Naive thymus-derived CD4-positive, alpha-beta T cell (primary cell): ENCODE measurements at regions of chr14 and their contacts with region 1.

Region 1: GRCh38 chr14:46887144-46887543 is 235.6 kb upstream of the RPL10L start:
- DNase-seq: no peak
- ATAC-seq: no peak
- H3K4me3 ChIP-seq: no peak overlapping the region
- H3K4me3 Mint-ChIP-seq: no peak overlapping the region
- H3K27ac ChIP-seq: no peak overlapping the region
- H3K27ac Mint-ChIP-seq: no peak overlapping the region
- H3K4me1 ChIP-seq: no peaks in the 10 kb centered on the region
- H3K4me1 Mint-ChIP-seq: no peaks in the 10 kb centered on the region
- H3K27me3 ChIP-seq: no peaks in the 10 kb centered on the region
- H3K27me3 Mint-ChIP-seq: no peaks in the 10 kb centered on the region

Region 2: DNA sequence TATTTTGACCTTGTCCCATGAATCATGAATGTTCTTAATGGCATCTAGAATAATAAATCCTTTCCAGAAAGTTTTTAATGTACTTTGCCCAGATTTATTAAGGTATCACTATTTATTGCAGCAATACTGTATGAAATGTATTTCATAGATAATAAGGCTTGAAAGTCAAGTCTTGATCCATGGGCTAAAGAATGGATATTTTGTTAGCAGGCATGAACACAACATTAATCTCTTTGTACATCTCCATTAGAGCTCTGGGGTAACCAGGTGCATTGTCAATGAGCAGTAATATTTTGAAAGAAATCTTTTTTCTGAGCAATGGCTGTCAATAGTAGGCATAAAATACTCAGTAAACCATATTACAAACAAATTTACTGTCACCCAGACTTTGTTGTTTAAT is 94.0 kb before region 1 on chr14:
- CTCF ChIA-PET with region 1: no interaction called
- POLR2A ChIA-PET with region 1: no interaction called
- intact Hi-C with region 1: loop called in 1 of 2 experiments (anchors 5 kb)
- DNase-seq: no peak
- ATAC-seq: no peak
- H3K4me3 ChIP-seq: no peak overlapping the region
- H3K4me3 Mint-ChIP-seq: no peak overlapping the region
- H3K27ac ChIP-seq: no peak overlapping the region
- H3K27ac Mint-ChIP-seq: no peak overlapping the region
- H3K4me1 ChIP-seq: no peaks in the 10 kb centered on the region
- H3K4me1 Mint-ChIP-seq: no peaks in the 10 kb centered on the region
- H3K27me3 ChIP-seq: no peaks in the 10 kb centered on the region
- H3K27me3 Mint-ChIP-seq: no peaks in the 10 kb centered on the region